Dendritic cell treated with granulocyte-macrophage colony-stimulating factor and Interleukin-4, amounts not matched to agents 40 ng/mL and 50 ng/mL, for 4 days (primary cell): ENCODE measurements at regions of chr3 and their contacts with region 1.

Region 1: DNA sequence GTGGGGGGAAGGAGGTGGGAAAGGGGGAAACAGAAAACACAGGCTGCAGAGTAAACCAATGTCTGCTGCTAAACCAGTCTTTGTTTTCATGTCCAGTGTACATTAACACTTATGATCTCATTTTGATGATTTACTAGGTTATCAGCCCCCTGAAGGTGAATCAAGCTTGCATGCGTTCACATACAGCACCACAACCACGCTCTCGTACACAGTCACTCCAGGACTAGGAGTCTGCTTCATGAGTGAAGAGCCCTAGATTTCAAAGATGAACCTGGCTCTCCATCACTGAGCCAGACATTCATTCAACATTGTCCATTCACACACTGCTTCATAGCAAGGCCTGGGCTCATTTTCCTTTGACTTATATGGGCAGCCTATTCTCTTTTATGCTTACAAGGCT is 51.7 kb upstream of the TRIM59 start:
- H3K4me3 Mint-ChIP-seq: no peak overlapping the region
- H3K27ac Mint-ChIP-seq: no peak overlapping the region
- H3K4me1 Mint-ChIP-seq: no peaks in the 10 kb centered on the region
- H3K27me3 Mint-ChIP-seq: no peaks in the 10 kb centered on the region

Region 2: DNA sequence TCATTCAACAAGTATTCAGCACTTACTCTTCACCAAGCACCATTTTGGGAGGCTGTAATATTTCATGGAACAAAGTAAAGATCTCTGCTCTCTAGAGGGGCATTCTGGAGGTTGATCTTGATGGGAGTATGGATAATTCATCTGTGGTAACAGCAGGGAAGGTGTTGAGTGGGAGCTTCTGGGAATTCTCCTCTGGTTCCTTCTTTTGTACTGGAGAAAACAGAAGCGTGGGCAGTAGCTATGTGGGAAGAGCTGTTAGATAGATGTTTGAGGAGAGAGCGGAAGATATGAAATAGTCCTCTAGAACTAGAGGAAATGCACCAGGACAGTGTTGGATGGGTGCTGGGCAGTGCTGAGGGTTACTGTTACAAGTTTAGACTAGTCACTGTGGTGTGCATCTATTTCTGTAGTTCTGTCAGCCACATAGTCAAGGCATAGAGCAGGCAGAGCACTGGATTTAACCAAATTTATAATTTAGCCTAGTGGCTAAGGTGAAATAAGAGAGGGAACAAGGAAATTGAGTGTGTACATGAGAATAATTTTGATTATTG is 729.4 kb after region 1 on chr3:
- intact Hi-C with region 1: loop called (anchors 10 kb)
- H3K4me3 Mint-ChIP-seq: no peak overlapping the region
- H3K27ac Mint-ChIP-seq: no peak overlapping the region
- H3K4me1 Mint-ChIP-seq: no peaks in the 10 kb centered on the region
- H3K27me3 Mint-ChIP-seq: no peaks in the 10 kb centered on the region